Ovary (tissue), 10 donors: ENCODE measurements at regions of chr17 and their contacts with region 1.

Region 1: GRCh38 chr17:17681187-17681848 is at the start of gene RAI1:
- DNase-seq: peak; percentile 80 to 90 (median 85)
- H3K4me3 ChIP-seq: peak within 1 kb of the TSS; percentile 68
- H3K27ac ChIP-seq: peak within 1 kb of the TSS; percentile 89 to 96
- H3K4me1 ChIP-seq: peaks cover 19% of the 10 kb centered on the region
- H3K27me3 ChIP-seq: no peaks in the 10 kb centered on the region
- CTCF ChIP-seq: peak; percentile 17 to 98 (median 94)
- EP300 ChIP-seq: no peak
- POLR2A ChIP-seq: peak; percentile 53
- total RNA-seq, gene RAI1: 16.3 to 57.7 (median 37.5) TPM

Region 2: DNA sequence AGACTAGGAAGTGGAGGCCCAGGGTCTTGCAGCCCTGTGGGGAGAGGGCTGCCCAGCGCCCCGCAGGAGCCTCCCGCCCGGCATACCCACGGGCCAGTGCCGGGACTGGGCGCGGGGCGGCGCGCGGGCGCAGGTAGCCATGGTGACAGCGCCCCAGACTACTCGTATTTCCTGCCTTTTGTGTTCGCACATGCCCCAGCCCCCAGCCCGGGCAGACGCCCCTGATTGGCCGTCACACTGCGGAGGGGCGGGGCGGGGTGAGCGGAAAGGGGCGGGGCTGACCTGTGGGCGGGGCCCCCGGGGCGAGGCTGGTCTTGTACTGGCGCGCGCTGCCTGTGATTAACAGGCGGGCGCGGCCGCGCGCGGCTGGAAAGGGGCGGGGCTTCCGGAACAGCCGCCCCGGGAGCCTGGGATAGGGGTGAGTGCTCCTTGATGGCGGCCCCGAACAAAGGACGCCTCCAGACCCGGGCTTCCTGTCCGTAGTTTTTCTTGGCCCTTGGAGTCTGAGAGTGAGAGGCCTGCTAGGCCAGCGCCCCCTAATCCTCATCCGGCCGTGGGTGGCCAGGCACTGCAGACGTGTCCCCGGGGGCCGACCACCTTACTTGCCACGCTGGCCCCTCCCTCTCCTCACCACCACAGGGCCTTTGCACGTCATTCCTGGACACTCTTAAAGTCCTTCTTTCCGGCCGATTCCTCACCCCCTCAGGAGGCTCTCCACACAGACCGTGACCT is 70.9 kb after region 1 on chr17:
- intact Hi-C with region 1: loop called in 1 of 4 experiments (anchors 10 kb)
- DNase-seq: peak; percentile 96 to 98 (median 97)
- H3K4me3 ChIP-seq: peak overlapping the region; percentile 42
- H3K27ac ChIP-seq: peak overlapping the region; percentile 6 to 56
- H3K4me1 ChIP-seq: peaks cover 9% of the 10 kb centered on the region
- H3K27me3 ChIP-seq: no peaks in the 10 kb centered on the region
- CTCF ChIP-seq: peak in 1 of 3 donors; percentile 39
- EP300 ChIP-seq: no peak
- POLR2A ChIP-seq: no peak

Region 3: GRCh38 chr17:17859909-17860765 is 178.8 kb after region 1 on chr17:
- intact Hi-C with region 1: loop called (anchors 2 to 5 kb)
- DNase-seq: peak; percentile 66 to 79 (median 77)
- H3K4me3 ChIP-seq: no peak overlapping the region
- H3K27ac ChIP-seq: no peak overlapping the region
- H3K4me1 ChIP-seq: peaks cover 4% of the 10 kb centered on the region
- H3K27me3 ChIP-seq: no peaks in the 10 kb centered on the region
- CTCF ChIP-seq: peak; percentile 93 to 96 (median 96)
- EP300 ChIP-seq: no peak
- POLR2A ChIP-seq: no peak

Region 4: GRCh38 chr17:17919169-17920107 is 238.1 kb after region 1 on chr17:
- intact Hi-C with region 1: loop called in 1 of 4 experiments (anchors 10 kb)
- DNase-seq: peak; percentile 68 to 80 (median 72)
- H3K4me3 ChIP-seq: no peak overlapping the region
- H3K27ac ChIP-seq: no peak overlapping the region
- H3K4me1 ChIP-seq: peaks cover 11% of the 10 kb centered on the region
- H3K27me3 ChIP-seq: no peaks in the 10 kb centered on the region
- CTCF ChIP-seq: peak in 2 of 3 donors; percentile 54 to 56
- EP300 ChIP-seq: no peak
- POLR2A ChIP-seq: no peak

Region 5: DNA sequence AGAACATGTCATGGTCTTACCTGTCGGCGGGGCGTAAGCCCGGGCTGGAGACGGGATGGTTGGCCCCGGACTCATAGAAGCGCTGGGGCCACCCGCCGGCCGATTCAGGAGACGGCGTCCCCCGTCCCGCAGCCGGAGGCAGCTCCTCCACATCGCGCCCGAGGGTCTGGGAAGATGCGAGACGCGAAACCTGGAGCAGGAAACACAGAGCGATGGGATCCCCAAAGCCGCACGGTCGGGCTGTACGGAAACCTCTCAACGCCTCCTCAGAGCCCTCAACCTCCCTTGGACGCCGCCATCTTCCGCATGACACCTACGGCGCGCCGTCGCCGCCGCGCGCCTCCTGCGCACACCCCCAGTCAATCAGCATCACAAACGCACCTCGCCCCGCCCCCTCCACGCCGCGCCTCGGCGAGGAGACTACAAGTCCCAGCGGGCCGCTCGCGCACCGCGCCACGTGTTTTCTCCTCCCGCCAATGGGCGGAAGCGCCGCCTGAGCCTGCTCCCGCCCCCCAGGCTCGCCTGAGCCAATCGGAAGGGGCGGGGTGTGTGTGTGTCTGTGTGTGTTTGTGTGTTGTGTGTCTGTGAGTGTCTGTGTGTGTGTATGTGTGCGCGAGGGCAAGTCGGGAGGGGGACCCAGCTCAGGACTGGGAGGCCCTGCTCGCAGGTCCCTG is 357.7 kb after region 1 on chr17 and contains the starts of genes ATPAF2 and GID4:
- intact Hi-C with region 1: loop called (anchors 2 to 10 kb)
- DNase-seq: peak; percentile 99 to 100 (median 100)
- H3K4me3 ChIP-seq: peak within 1 kb of the TSS; percentile 91
- H3K27ac ChIP-seq: peak within 1 kb of the TSS; percentile 61 to 68
- H3K4me1 ChIP-seq: peaks cover 7% of the 10 kb centered on the region
- H3K27me3 ChIP-seq: no peaks in the 10 kb centered on the region
- CTCF ChIP-seq: peak in 1 of 3 donors; percentile 24
- EP300 ChIP-seq: no peak
- POLR2A ChIP-seq: peak; percentile 18
- total RNA-seq, gene ATPAF2: 5.5 to 18.6 (median 15.5) TPM
- total RNA-seq, gene GID4: 6.0 to 13.2 (median 11.2) TPM